Pancreas (tissue), 10 donors: ENCODE measurements at regions of chr16 and their contacts with region 1.

Region 1: GRCh38 chr16:84726079-84726668 is 26.4 kb downstream of the USP10 start:
- DNase-seq: peak; percentile 67 to 96 (median 84)
- ATAC-seq: peak; percentile 78 to 89 (median 89)
- H3K4me3 ChIP-seq: no peak overlapping the region
- H3K27ac ChIP-seq: peak overlapping the region in 1 of 4 donors; percentile 9
- H3K4me1 ChIP-seq: peaks cover 13 to 33% (median 14%) of the 10 kb centered on the region in 3 donors
- H3K27me3 ChIP-seq: no peaks in the 10 kb centered on the region
- CTCF ChIP-seq: peak; percentile 89 to 94 (median 90)

Region 2: GRCh38 chr16:84511180-84511824 is 214.9 kb before region 1 on chr16:
- intact Hi-C with region 1: loop called in 2 of 3 experiments (anchors 5 to 10 kb)
- DNase-seq: peak; percentile 67 to 96 (median 82)
- ATAC-seq: peak; percentile 87 to 92 (median 89)
- H3K4me3 ChIP-seq: no peak overlapping the region
- H3K27ac ChIP-seq: no peak overlapping the region
- H3K4me1 ChIP-seq: peaks cover 0 to 4% (median 0%) of the 10 kb centered on the region in 3 donors
- H3K27me3 ChIP-seq: no peaks in the 10 kb centered on the region
- CTCF ChIP-seq: peak; percentile 89 to 99 (median 98)

Region 3: DNA sequence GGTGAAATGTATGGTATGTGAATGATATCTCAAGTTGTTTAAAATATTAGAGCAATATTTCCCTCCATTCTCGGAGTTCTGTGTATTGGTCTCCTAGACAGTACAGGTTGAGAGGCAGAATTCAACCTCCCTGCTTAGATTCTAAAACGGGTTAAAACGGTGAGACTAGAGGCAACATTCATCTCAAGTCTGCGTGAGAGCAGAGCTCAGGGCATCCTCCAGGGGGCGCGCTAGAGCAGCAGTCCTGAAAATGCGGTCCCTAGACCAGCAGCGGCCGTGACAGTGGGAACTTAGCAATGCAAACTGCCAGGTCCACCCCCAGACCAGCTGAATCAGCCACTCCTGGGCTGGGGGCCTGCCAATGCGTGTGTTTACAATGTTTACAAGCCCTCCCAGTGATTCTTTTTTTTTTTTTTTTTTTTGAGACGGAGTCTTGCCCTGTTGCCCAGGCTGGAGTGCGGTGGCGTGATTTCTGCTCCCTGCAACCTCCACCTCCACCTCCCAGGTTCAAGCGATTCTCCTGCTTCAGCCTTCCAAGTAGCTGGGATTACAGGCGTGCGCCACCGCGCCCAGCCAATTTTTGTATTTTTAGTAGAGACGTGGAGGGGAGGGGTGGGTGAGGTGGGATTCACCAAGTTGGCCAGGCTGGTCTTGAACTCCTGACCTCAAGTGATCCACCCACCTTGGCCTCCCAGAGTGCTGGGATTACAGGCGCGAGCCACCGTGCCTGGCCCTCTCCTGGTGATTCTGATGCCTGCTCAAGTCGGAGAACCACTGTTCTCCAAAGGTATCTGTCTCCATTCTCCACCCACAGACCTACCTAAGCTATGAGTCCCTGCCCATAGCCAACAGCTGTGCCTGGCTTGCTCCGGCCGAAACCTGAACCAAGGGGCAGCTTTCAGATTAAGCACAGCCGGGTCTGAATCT is 53.6 kb before region 1 on chr16:
- intact Hi-C with region 1: loop called in 2 of 3 experiments (anchors 10 kb)
- DNase-seq: peak; percentile 54 to 95 (median 80)
- ATAC-seq: peak; percentile 89 to 98 (median 94)
- H3K4me3 ChIP-seq: no peak overlapping the region
- H3K27ac ChIP-seq: no peak overlapping the region
- H3K4me1 ChIP-seq: no peaks in the 10 kb centered on the region
- H3K27me3 ChIP-seq: no peaks in the 10 kb centered on the region
- CTCF ChIP-seq: peak; percentile 88 to 91 (median 90)